Caco-2 (cell line): ENCODE measurements at regions of chr6 and their contacts with region 1.

Region 1: GRCh38 chr6:108321253-108321740 is 26.4 kb downstream of the AFG1L start:
- DNase-seq: no peak
- H3K4me3 ChIP-seq: no peak overlapping the region
- H3K4me3 Mint-ChIP-seq: no peak overlapping the region
- H3K27ac Mint-ChIP-seq: no peak overlapping the region
- H3K4me1 ChIP-seq: no peaks in the 10 kb centered on the region
- H3K4me1 Mint-ChIP-seq: no peaks in the 10 kb centered on the region
- H3K27me3 ChIP-seq: no peaks in the 10 kb centered on the region
- H3K27me3 Mint-ChIP-seq: no peaks in the 10 kb centered on the region
- CTCF ChIP-seq: no peak

Region 2: DNA sequence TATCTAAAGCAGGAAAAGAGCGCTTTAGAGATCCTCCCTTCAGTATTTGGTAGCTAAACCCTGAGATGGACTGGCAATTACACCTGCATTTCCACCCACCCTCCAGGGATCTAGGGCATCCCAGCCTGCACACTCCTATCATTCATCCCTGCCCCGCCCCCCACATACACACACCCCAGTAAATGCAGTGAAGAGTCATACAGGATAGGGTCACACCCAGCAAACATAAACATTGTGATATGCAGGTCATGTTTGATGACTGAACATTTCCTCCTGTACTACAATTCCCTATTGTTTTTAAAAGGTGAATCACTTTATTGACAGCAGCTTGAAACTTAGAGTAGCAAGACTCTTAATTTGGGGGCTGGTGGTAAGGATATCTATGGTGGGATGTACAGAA is 352.3 kb after region 1 on chr6:
- CTCF ChIA-PET with region 1: no interaction called
- POLR2A ChIA-PET with region 1: no interaction called
- intact Hi-C with region 1: no loop called
- DNase-seq: no peak
- H3K4me3 ChIP-seq: no peak overlapping the region
- H3K4me3 Mint-ChIP-seq: no peak overlapping the region
- H3K27ac Mint-ChIP-seq: peak overlapping the region; percentile 32
- H3K4me1 ChIP-seq: no peaks in the 10 kb centered on the region
- H3K4me1 Mint-ChIP-seq: peaks cover 25% of the 10 kb centered on the region
- H3K27me3 ChIP-seq: no peaks in the 10 kb centered on the region
- H3K27me3 Mint-ChIP-seq: no peaks in the 10 kb centered on the region
- CTCF ChIP-seq: no peak

Region 3: DNA sequence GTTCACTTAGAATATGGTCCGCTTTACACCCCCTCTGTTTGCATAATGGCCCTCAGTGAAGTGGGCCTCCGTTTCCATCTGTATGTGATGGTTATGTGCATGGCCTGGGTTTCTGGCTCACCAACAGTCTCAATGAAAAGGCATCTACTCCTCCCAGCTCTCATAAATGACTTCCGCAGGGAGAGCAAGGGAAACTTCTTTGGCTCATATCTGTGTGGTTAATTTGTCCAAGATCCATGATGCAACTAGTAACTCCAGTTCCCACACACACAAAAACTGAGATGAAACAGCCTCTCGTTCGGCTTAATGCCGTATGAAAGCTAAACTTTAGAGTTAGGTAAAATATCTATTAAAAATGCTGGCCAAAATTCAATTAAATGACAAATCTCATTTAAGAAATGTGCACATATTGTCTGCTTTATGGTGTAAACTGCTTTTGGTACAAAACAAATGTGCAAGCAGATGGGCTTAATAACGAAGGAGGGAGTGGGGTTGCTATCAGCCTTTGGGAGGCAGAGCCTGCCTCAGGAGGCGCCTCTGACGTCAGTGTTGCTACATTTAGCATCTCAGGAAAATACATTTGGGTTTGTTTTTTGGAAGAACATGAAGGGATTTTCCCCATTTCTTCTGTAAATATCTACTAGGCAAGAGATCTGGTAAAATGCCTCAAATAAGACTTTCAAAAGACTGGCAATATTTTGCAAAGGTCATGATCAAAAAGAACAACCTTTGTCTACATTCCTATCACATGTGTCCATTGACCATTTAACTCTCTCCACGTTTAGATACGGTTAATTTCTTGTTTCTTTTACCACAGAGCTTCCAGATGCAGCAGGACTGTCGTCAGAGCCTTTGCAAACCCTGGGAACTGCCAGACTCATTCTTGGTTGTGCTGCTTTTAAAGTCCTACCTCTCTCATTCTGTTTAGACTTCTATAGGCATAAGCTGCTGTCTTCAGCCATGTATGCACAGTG is 623.7 kb after region 1 on chr6:
- CTCF ChIA-PET with region 1: no interaction called
- POLR2A ChIA-PET with region 1: no interaction called
- intact Hi-C with region 1: loop called (anchors 5 kb)
- DNase-seq: no peak
- H3K4me3 ChIP-seq: no peak overlapping the region
- H3K4me3 Mint-ChIP-seq: no peak overlapping the region
- H3K27ac Mint-ChIP-seq: no peak overlapping the region
- H3K4me1 ChIP-seq: peaks cover 16% of the 10 kb centered on the region
- H3K4me1 Mint-ChIP-seq: peaks cover 7% of the 10 kb centered on the region
- H3K27me3 ChIP-seq: no peaks in the 10 kb centered on the region
- H3K27me3 Mint-ChIP-seq: no peaks in the 10 kb centered on the region
- CTCF ChIP-seq: no peak